Lower leg skin (tissue), 4 donors: ENCODE measurements at regions of chr11 and their contacts with region 1.

Region 1: DNA sequence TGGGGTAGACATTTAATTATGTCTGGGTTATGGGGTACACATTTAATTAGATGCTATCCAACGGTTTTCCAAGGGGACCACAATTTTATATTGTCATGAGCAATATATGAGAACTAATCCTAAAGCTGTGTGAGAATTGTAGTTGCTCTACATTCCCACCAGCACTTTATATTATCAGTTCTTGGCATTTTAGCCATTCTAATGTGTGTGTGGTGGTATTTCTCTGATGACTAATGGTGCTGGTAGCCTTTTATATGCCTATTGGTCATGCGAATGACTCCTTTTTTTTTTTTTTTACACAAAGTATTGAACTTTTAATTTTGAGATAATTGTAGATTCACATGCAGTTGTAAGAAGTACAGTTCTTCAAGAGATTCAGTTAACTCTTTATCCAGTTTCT is 26.2 kb downstream of the TMEM135 start:
- DNase-seq: no peak
- H3K4me3 ChIP-seq: no peak overlapping the region
- CTCF ChIP-seq: no peak
- POLR2A ChIP-seq: no peak

Region 2: DNA sequence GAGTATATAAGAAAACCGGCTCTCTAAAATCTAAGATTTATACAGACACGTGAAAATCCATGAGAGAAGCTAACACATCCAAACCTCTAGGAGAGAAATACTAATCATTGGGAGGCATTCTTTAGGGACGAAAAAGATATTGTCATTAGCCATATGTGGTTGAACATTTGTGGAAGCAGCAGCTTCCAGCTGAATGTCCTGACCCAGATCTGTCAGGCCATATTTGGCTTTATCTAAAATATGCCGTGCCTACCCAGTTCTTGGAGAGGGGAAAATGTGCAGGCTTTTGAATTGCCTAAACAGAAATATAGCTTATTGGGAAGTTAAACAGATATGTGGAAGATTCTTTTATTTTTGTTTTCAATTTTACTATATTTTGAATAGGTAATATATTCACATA is 1384.4 kb before region 1 on chr11:
- intact Hi-C with region 1: loop called (anchors 5 kb)
- DNase-seq: no peak
- H3K4me3 ChIP-seq: no peak overlapping the region
- CTCF ChIP-seq: no peak
- POLR2A ChIP-seq: no peak